CD4-positive, alpha-beta T cell (primary cell): ENCODE measurements at regions of chr17 and their contacts with region 1.

Region 1: DNA sequence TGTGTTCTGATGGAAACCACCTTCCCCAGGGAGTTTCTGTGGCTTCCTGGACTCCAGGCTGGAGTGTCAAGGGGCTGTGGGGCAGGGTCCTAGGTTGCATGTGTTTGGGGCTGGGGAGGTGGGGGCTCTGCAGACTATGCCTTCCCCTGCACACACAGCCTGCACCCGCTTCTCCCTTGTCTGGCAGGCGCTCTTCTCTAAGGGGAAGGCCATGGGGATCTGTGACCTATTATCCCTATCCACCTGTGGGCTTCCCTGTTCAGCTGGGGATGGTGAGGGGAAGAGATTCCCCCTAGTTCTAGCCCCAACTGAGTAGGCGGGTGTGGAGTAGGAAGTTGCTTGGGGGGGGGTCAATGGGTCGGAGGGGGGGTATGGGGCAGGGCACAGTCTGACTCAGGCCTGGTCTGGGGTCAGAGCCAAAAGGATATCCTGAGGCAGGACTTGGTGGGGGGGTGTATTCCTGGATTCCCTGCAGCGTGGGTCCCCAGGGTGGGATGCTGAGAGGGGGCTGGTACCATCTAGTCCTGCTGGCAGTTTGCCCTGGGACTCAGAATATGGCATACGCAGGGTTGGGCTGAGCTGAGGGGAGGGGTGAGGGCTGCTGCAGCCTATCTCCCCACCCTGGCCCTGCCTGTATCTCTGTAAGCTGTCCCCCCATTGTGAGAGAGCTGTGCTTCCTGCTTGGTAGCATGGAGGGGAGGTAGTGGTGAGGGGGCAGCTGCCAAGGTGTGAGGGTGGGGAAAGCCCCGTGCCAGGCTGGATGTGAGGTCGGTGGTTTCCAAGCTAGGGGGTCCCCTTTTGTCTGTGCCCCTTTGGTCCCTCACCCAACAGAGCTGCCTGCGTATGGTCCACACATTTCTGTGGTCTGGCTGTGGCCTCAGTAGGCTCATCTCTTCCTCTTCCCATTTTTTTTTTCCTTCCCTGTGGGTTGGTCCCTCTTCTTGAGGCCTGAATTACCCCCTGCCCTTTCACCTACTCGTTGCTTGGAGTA is 14.7 kb downstream of the RARA start:
- DNase-seq: peak in 12 of 14 experiments; percentile 32 to 97 (median 60)
- ATAC-seq: peak; percentile 15
- H3K4me3 ChIP-seq: peak overlapping the region; percentile 96
- H3K4me3 Mint-ChIP-seq: peak overlapping the region; percentile 95
- H3K27ac ChIP-seq: peak overlapping the region; percentile 99
- H3K27ac Mint-ChIP-seq: peak overlapping the region; percentile 99
- H3K4me1 ChIP-seq: peaks cover 99% of the 10 kb centered on the region
- H3K4me1 Mint-ChIP-seq: peaks cover 98% of the 10 kb centered on the region
- H3K27me3 ChIP-seq: no peaks in the 10 kb centered on the region
- H3K27me3 Mint-ChIP-seq: no peaks in the 10 kb centered on the region
- CTCF ChIP-seq: no peak

Region 2: DNA sequence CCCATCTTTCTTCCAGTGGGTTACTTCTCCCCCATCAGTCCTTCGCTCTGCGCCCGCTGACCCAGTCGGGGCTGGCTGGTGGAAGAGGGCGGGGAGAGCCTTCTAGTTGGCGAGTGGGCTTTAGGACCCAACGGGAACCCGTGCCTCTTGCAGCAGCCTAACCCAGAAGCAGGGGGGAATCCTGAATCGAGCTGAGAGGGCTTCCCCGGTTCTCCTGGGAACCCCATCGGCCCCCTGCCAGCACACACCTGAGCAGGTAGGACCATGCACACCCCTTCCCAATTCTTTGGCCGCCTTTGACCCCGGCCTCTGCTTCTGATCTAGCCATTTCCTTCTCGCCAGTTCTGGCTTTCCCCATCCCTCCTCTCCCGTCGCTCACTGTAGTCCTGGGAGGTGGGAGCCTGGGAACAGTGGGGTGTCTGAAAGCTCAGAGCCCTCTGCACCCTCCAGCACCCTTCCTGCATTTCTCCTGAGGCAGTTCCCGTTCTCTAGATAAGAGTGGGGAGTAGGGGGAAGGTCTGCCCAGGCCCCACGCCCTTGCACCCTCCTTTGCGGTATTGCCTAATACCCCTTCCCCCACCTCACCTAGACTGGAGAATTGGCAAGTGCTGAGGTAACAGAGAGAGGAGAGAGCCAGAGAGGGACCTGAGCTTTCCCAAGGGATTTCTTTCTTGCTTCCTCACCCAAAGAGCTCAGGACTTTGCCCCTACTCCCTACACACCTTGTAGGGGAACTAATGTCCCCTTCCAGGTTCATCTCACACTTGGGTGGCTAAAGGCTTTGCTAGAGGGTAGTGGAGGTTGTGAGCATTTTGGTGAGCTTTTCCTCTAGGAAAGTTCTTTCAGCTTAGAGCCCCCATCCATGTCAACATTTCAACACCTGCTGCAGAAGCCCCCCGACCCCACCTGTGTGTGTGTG is 14.4 kb before region 1 on chr17 and contains the start of gene RARA:
- CTCF ChIA-PET with region 1: interaction called, 21 read pairs
- POLR2A ChIA-PET with region 1: interaction called, 34 read pairs
- intact Hi-C with region 1: no loop called
- DNase-seq: peak in 3 of 14 experiments; percentile 37 to 54 (median 50)
- ATAC-seq: peak; percentile 48
- H3K4me3 ChIP-seq: peak within 1 kb of the TSS; percentile 24
- H3K4me3 Mint-ChIP-seq: no peak within 1 kb of the TSS
- H3K27ac ChIP-seq: no peak within 1 kb of the TSS
- H3K27ac Mint-ChIP-seq: no peak within 1 kb of the TSS
- H3K4me1 ChIP-seq: peaks cover 69% of the 10 kb centered on the region
- H3K4me1 Mint-ChIP-seq: peaks cover 31% of the 10 kb centered on the region
- H3K27me3 ChIP-seq: no peaks in the 10 kb centered on the region
- H3K27me3 Mint-ChIP-seq: no peaks in the 10 kb centered on the region
- CTCF ChIP-seq: no peak
- total RNA-seq, gene RARA: 114 to 115 TPM